ENCODE measurements at regions of chr15 and their contacts with region 1.

Region 1: DNA sequence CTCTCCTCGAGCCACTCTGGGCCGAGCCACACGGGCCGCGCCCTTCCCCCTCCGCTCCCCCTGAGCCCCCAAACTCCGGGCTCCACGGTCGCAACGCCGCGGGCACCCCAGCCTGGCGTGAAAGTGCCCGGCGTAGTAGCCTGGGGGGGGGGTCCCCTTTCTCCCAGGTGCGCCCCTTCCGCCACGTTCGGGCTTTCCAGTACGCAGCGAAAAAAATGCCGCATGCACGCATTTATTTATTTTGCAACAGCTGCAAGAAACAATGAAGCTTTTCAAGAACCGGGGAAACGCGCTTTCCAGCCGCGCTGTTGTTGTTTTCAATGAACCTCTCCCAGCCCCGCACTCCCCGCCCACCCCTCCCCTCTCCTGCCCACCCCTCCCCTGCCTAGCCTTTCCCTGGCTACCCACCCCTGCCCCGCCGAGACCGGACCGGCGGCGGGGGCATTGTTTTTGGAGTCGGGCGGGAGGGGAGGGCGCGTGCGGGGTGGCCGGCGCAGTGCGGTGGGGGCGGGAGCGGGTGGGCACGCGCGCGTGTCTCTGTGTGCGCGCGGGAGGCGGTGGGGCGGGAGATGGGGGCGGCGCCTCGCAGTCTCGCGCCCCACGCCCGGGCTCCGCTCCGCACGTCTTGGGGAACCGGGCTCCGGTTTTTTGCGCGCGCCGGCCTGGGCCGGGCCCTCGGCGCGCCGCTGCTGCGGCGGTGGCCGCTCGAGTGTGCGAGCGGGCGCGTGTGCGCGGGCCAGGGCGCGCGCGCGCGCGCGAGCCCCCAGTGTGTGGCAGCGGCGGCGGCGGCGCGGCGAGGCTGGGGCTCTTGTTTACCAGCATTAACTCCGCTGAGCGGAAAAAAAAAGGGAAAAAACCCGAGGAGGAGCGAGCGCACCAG is at the start of gene IGF1R:
- DNase-seq: peak; percentile 88 to 94 (median 91)
- ATAC-seq: peak; percentile 46 to 89 (median 76)
- H3K4me3 ChIP-seq: peak within 1 kb of the TSS; percentile 68 to 93 (median 86)
- H3K27ac ChIP-seq: peak within 1 kb of the TSS; percentile 90 to 97 (median 94)
- H3K4me1 ChIP-seq: peaks cover 0 to 36% (median 19%) of the 10 kb centered on the region in 12 donors
- H3K27me3 ChIP-seq: peaks cover 0 to 68% (median 17%) of the 10 kb centered on the region in 9 donors
- CTCF ChIP-seq: peak in 5 of 12 donors; percentile 2 to 44 (median 19)
- POLR2A ChIP-seq: peak; percentile 35 to 54
- total RNA-seq, gene IGF1R: 26.0 to 93.1 (median 47.5) TPM

Region 2: GRCh38 chr15:98187549-98187948 is 460.5 kb before region 1 on chr15:
- intact Hi-C with region 1: no loop called
- DNase-seq: no peak
- ATAC-seq: no peak
- H3K4me3 ChIP-seq: no peak overlapping the region
- H3K27ac ChIP-seq: no peak overlapping the region
- H3K4me1 ChIP-seq: no peaks in the 10 kb centered on the region
- H3K27me3 ChIP-seq: peaks cover 0 to 21% (median 0%) of the 10 kb centered on the region in 9 donors
- CTCF ChIP-seq: no peak
- POLR2A ChIP-seq: no peak

Region 3: DNA sequence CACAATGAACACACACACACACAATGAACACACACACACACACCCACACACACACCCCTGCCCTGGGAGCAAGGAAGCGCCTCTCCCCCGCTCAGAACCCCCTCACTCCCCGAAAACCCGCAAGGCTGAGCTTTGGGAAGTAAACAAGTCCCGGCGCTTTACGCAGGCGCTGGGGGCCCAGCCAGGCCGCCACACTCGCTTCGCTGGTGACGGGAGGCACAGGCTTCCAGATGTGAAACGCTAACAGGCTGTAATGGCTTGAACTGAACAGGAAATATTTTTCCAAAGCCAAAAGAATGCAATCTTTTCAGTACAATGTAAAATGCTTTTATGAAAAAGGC is 122.4 kb before region 1 on chr15:
- intact Hi-C with region 1: loop called in 2 of 10 experiments (anchors 2 to 10 kb)
- DNase-seq: no peak
- ATAC-seq: peak in 1 of 4 donors; percentile 32
- H3K4me3 ChIP-seq: peak overlapping the region in 1 of 12 donors; percentile 19
- H3K27ac ChIP-seq: no peak overlapping the region
- H3K4me1 ChIP-seq: no peaks in the 10 kb centered on the region
- H3K27me3 ChIP-seq: peaks cover 0 to 10% (median 0%) of the 10 kb centered on the region in 9 donors
- CTCF ChIP-seq: no peak
- POLR2A ChIP-seq: no peak

Region 4: GRCh38 chr15:98727115-98728085 is 79.4 kb after region 1 on chr15:
- intact Hi-C with region 1: loop called in 4 of 10 experiments (anchors 5 to 10 kb)
- DNase-seq: peak; percentile 87 to 95 (median 93)
- ATAC-seq: peak; percentile 87 to 95 (median 94)
- H3K4me3 ChIP-seq: peak overlapping the region in 3 of 12 donors; percentile 3 to 15 (median 14)
- H3K27ac ChIP-seq: peak overlapping the region; percentile 52 to 95 (median 90)
- H3K4me1 ChIP-seq: peaks cover 3 to 95% (median 73%) of the 10 kb centered on the region in 12 donors
- H3K27me3 ChIP-seq: no peaks in the 10 kb centered on the region
- CTCF ChIP-seq: no peak
- POLR2A ChIP-seq: no peak

Region 5: DNA sequence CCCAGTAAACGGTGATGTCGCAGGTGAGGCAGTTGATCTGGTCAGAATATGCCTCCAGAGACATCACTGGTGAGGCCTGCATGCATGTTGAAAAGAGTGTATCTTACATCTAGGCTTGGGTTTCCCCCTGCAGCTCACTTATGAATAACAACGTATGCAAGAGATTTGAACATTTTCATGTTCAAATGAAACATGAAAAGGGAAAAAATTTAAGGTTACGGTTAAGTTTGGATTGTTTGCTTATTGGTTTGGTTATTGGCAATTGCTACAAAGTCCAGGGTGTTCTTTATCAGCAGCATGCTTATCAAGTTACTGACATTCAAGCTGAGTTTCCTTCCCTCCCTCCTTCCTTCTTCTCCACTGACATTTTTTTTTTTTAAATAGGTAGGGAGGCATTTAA is 123.5 kb after region 1 on chr15:
- intact Hi-C with region 1: loop called in 7 of 10 experiments (anchors 5 kb)
- DNase-seq: no peak
- ATAC-seq: no peak
- H3K4me3 ChIP-seq: no peak overlapping the region
- H3K27ac ChIP-seq: peak overlapping the region in 1 of 12 donors; percentile 25
- H3K4me1 ChIP-seq: peaks cover 0 to 76% (median 33%) of the 10 kb centered on the region in 12 donors
- H3K27me3 ChIP-seq: no peaks in the 10 kb centered on the region
- CTCF ChIP-seq: peak in 1 of 12 donors; percentile 17
- POLR2A ChIP-seq: no peak

Region 6: GRCh38 chr15:99059010-99059981 is 411.3 kb after region 1 on chr15:
- intact Hi-C with region 1: loop called in 6 of 10 experiments (anchors 1 to 10 kb)
- DNase-seq: peak; percentile 84 to 91 (median 86)
- ATAC-seq: peak; percentile 85 to 94 (median 88)
- H3K4me3 ChIP-seq: peak overlapping the region; percentile 44 to 73 (median 62)
- H3K27ac ChIP-seq: peak overlapping the region; percentile 39 to 94 (median 79)
- H3K4me1 ChIP-seq: peaks cover 0 to 39% (median 18%) of the 10 kb centered on the region in 12 donors
- H3K27me3 ChIP-seq: peaks cover 0 to 13% (median 0%) of the 10 kb centered on the region in 9 donors
- CTCF ChIP-seq: peak; percentile 50 to 89 (median 78)
- POLR2A ChIP-seq: peak in 1 of 2 donors; percentile 35

Region 7: GRCh38 chr15:99076552-99077308 is 428.7 kb after region 1 on chr15:
- intact Hi-C with region 1: loop called in 2 of 10 experiments (anchors 1 to 10 kb)
- DNase-seq: peak in 4 of 5 donors; percentile 60 to 69 (median 64)
- ATAC-seq: peak; percentile 71 to 91 (median 86)
- H3K4me3 ChIP-seq: peak overlapping the region in 10 of 12 donors; percentile 25 to 54 (median 42)
- H3K27ac ChIP-seq: peak overlapping the region in 1 of 12 donors; percentile 47
- H3K4me1 ChIP-seq: peaks cover 0 to 4% (median 0%) of the 10 kb centered on the region in 12 donors
- H3K27me3 ChIP-seq: no peaks in the 10 kb centered on the region
- CTCF ChIP-seq: peak; percentile 76 to 93 (median 86)
- POLR2A ChIP-seq: no peak